Panc1 (cell line): ENCODE measurements at regions of chr10 and their contacts with region 1.

Region 1: DNA sequence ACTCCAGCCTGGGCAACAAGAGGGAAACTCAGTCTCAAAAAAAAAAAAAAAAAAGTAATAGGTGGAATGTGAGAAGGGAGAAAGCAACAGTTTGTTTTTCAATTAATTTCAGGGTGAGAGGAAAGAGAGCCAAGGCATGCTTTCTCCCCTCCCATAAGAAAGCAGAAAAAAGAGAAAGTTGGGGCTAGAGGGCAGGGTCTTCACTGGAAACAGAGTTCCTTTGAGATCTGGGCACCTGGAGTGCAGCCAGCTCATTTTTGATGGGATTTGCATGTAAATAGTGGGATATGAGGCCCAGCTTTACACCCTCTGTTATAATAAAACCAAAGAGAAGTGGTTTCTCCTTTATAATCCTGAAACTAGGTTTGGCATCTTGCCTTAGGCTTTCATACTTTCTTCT is 13.8 kb upstream of the STOX1 start:
- DNase-seq: no peak
- ATAC-seq: no peak
- H3K4me3 ChIP-seq: no peak overlapping the region
- H3K27ac ChIP-seq: no peak overlapping the region
- H3K4me1 ChIP-seq: no peaks in the 10 kb centered on the region
- H3K27me3 ChIP-seq: no peaks in the 10 kb centered on the region
- CTCF ChIP-seq: no peak

Region 2: GRCh38 chr10:68348265-68348741 is 465.3 kb before region 1 on chr10:
- CTCF ChIA-PET with region 1: no interaction called
- POLR2A ChIA-PET with region 1: no interaction called
- in situ Hi-C with region 1: no loop called
- intact Hi-C with region 1: no loop called
- DNase-seq: peak; percentile 58
- ATAC-seq: peak; percentile 70
- H3K4me3 ChIP-seq: no peak overlapping the region
- H3K27ac ChIP-seq: no peak overlapping the region
- H3K4me1 ChIP-seq: no peaks in the 10 kb centered on the region; the same call in 1 of the 2 replicates
- H3K27me3 ChIP-seq: no peaks in the 10 kb centered on the region
- CTCF ChIP-seq: peak; percentile 95

Region 3: GRCh38 chr10:68879627-68880026 is 66.1 kb after region 1 on chr10:
- CTCF ChIA-PET with region 1: no interaction called
- POLR2A ChIA-PET with region 1: no interaction called
- in situ Hi-C with region 1: no loop called
- intact Hi-C with region 1: loop called (anchors 5 kb)
- DNase-seq: no peak
- ATAC-seq: no peak
- H3K4me3 ChIP-seq: no peak overlapping the region
- H3K27ac ChIP-seq: no peak overlapping the region
- H3K4me1 ChIP-seq: no peaks in the 10 kb centered on the region
- H3K27me3 ChIP-seq: no peaks in the 10 kb centered on the region
- CTCF ChIP-seq: no peak

Region 4: DNA sequence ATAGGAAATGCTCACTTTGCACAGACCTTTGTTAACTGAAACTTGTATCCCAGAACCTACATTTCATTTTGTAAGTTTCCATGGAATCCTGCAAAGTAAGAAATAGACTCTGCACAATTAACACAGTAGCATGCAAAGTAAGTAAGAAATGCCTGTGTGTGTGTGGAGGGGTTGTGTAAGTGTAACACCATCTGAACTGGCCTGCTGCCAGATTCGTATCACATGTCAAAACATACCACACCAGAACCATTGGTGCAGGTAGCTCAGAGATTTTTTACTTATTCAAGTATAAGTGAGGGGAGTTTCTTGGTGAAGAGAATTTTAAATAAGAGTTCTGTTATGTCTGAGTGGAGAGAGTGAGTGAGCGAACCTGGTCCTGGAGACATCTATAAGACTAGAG is 124.6 kb after region 1 on chr10:
- CTCF ChIA-PET with region 1: no interaction called
- POLR2A ChIA-PET with region 1: no interaction called
- in situ Hi-C with region 1: no loop called
- intact Hi-C with region 1: no loop called
- DNase-seq: no peak
- ATAC-seq: peak; percentile 42; the same call in 1 of the 2 replicates
- H3K4me3 ChIP-seq: no peak overlapping the region
- H3K27ac ChIP-seq: no peak overlapping the region
- H3K4me1 ChIP-seq: no peaks in the 10 kb centered on the region
- H3K27me3 ChIP-seq: no peaks in the 10 kb centered on the region
- CTCF ChIP-seq: no peak